ENCODE measurements at regions of chr3 and their contacts with region 1.

Region 1: GRCh38 chr3:124761250-124761796 is 31.1 kb downstream of the UMPS start:
- DNase-seq: peak; percentile 88
- ATAC-seq: peak; percentile 95
- H3K4me3 ChIP-seq: no peak overlapping the region
- H3K27ac ChIP-seq: no peak overlapping the region
- H3K4me1 ChIP-seq: peaks cover 3% of the 10 kb centered on the region
- H3K27me3 ChIP-seq: no peaks in the 10 kb centered on the region
- CTCF ChIP-seq: peak; percentile 95

Region 2: DNA sequence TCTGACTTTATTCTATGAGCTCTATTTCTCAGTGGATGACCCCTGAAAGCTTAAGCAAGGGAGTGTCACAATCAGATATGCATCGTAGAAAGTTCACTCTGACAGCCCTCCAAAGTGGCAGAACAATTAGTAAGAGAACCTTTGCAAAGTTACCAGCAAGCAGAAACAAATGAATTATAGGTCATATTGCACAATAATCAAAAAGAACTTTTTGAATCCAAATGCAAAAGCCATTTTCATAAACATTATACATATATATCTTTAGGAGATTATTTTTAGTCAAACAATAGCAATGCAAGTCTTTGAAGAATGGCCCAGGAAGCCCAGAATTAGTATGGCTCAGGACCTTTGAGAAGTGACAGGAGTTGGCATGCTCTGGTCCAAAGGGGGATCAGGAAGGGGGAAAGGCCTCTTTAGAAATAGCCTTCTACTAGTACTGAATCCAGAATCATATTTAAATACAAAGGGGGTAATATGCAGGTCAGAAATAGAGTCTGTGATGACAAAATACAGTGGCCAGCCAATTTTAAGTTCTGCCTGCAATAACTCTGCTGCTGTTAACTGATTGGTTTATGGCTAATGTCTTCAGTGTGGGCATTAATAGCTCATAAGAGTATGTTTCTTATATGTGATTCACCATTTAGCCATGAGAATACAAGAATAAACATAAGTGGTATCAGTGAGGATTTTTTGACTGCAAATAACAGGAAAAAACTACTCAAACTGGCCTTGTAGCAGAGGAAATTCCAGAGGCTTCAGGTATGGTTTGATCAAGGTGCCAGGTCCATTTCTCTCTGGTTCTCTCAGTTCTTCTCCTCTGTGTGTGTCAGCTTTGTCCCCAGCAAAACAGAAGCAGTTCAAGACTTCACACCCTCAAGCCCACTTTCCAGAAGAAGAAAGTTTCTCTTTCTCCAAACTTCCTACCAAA is 142.8 kb after region 1 on chr3:
- intact Hi-C with region 1: loop called (anchors 5 kb)
- DNase-seq: no peak
- ATAC-seq: no peak
- H3K4me3 ChIP-seq: no peak overlapping the region
- H3K27ac ChIP-seq: no peak overlapping the region
- H3K4me1 ChIP-seq: no peaks in the 10 kb centered on the region
- H3K27me3 ChIP-seq: no peaks in the 10 kb centered on the region
- CTCF ChIP-seq: no peak